ENCODE measurements at regions of chrX and their contacts with region 1.

Region 1: GRCh38 chrX:154748712-154749343 is 2.0 kb downstream of the GAB3 start:
- DNase-seq: peak; percentile 62 to 75 (median 71)
- H3K4me3 ChIP-seq: no peak overlapping the region
- H3K4me3 Mint-ChIP-seq: peak overlapping the region; percentile 26 to 86 (median 77)
- H3K27ac ChIP-seq: peak overlapping the region; percentile 26
- H3K27ac Mint-ChIP-seq: peak overlapping the region in 6 of 7 donors; percentile 69 to 84 (median 78)
- H3K4me1 ChIP-seq: peaks cover 39% of the 10 kb centered on the region
- H3K4me1 Mint-ChIP-seq: peaks cover 18 to 37% (median 25%) of the 10 kb centered on the region in 4 donors
- H3K27me3 ChIP-seq: no peaks in the 10 kb centered on the region
- H3K27me3 Mint-ChIP-seq: no peaks in the 10 kb centered on the region

Region 2: GRCh38 chrX:154727871-154728270 is 21.0 kb before region 1 on chrX:
- CTCF ChIA-PET with region 1: interaction called, 77 read pairs
- POLR2A ChIA-PET with region 1: interaction called, 40 read pairs
- intact Hi-C with region 1: loop called (anchors 1 kb)
- DNase-seq: no peak
- H3K4me3 ChIP-seq: no peak overlapping the region
- H3K4me3 Mint-ChIP-seq: no peak overlapping the region
- H3K27ac ChIP-seq: no peak overlapping the region
- H3K27ac Mint-ChIP-seq: peak overlapping the region in 1 of 7 donors; percentile 50
- H3K4me1 ChIP-seq: peaks cover 81% of the 10 kb centered on the region
- H3K4me1 Mint-ChIP-seq: peaks cover 52 to 86% (median 76%) of the 10 kb centered on the region in 4 donors
- H3K27me3 ChIP-seq: no peaks in the 10 kb centered on the region
- H3K27me3 Mint-ChIP-seq: no peaks in the 10 kb centered on the region

Region 3: GRCh38 chrX:154734061-154734781 is 14.6 kb before region 1 on chrX:
- CTCF ChIA-PET with region 1: interaction called, 77 read pairs
- POLR2A ChIA-PET with region 1: interaction called, 40 read pairs
- intact Hi-C with region 1: loop called (anchors 1 kb)
- DNase-seq: peak in 3 of 5 donors; percentile 24 to 66 (median 32)
- H3K4me3 ChIP-seq: peak overlapping the region in 1 of 2 donors; percentile 20
- H3K4me3 Mint-ChIP-seq: peak overlapping the region; percentile 50 to 85 (median 68)
- H3K27ac ChIP-seq: peak overlapping the region; percentile 64
- H3K27ac Mint-ChIP-seq: peak overlapping the region; percentile 87 to 93 (median 90)
- H3K4me1 ChIP-seq: peaks cover 98% of the 10 kb centered on the region
- H3K4me1 Mint-ChIP-seq: peaks cover 63 to 96% (median 76%) of the 10 kb centered on the region in 4 donors
- H3K27me3 ChIP-seq: no peaks in the 10 kb centered on the region
- H3K27me3 Mint-ChIP-seq: no peaks in the 10 kb centered on the region

Region 4: DNA sequence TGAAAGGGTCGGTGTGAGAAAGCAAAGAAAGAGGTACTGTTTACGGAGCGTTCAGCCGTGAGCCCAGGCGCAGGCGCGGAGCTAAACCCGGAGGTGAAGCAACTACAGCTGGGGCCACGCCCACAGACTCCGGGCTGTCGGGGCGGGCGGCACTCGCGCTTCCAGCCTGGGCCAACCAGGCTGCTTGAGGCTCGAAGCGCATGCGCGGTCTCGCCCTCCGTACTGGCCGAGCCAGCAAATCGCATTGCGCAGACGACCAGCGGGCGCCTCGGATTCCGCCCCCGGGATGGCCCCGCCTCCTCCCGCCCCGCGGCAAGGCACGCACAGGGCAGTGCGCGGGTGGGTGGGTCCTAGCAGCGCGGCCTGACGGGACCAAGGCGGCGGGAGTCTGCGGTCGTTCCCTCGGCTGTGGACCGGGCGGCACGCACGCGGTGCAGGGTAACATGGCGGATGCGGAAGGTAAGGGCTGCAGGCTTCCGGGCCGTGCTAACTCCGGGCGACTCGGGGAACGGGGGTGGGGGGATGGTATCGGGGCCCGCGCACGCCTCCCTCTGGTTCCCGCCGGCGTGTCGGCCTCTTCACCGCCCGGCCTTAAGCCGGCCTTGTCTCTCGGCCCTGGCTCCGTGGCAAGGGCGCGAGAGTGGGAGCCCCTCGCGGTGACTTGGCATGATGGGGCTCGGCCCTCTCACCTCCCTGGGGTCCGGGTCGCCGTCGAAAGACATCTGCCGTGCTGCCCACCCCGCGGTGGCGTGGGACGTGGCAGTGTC is 13.9 kb after region 1 on chrX and contains the start of gene DKC1:
- CTCF ChIA-PET with region 1: interaction called, 11 read pairs
- POLR2A ChIA-PET with region 1: interaction called, 63 read pairs
- intact Hi-C with region 1: loop called (anchors 1 kb)
- DNase-seq: peak; percentile 91 to 96 (median 95)
- H3K4me3 ChIP-seq: peak within 1 kb of the TSS; percentile 60 to 61
- H3K4me3 Mint-ChIP-seq: peak within 1 kb of the TSS; percentile 84 to 93 (median 88)
- H3K27ac ChIP-seq: peak within 1 kb of the TSS; percentile 71
- H3K27ac Mint-ChIP-seq: peak within 1 kb of the TSS; percentile 90 to 96 (median 94)
- H3K4me1 ChIP-seq: peaks cover 18% of the 10 kb centered on the region
- H3K4me1 Mint-ChIP-seq: peaks cover 10 to 25% (median 18%) of the 10 kb centered on the region in 4 donors
- H3K27me3 ChIP-seq: no peaks in the 10 kb centered on the region
- H3K27me3 Mint-ChIP-seq: no peaks in the 10 kb centered on the region
- total RNA-seq, gene DKC1: 60.0 to 63.9 TPM

Region 5: GRCh38 chrX:154840856-154841255 is 92.0 kb after region 1 on chrX:
- CTCF ChIA-PET with region 1: interaction called, 4 read pairs
- POLR2A ChIA-PET with region 1: interaction called, 3 read pairs
- intact Hi-C with region 1: loop called (anchors 1 kb)
- DNase-seq: peak in 4 of 5 donors; percentile 35 to 43 (median 36)
- H3K4me3 ChIP-seq: no peak overlapping the region
- H3K4me3 Mint-ChIP-seq: no peak overlapping the region
- H3K27ac ChIP-seq: no peak overlapping the region
- H3K27ac Mint-ChIP-seq: no peak overlapping the region
- H3K4me1 ChIP-seq: no peaks in the 10 kb centered on the region
- H3K4me1 Mint-ChIP-seq: peaks cover 0 to 1% (median 0%) of the 10 kb centered on the region in 4 donors
- H3K27me3 ChIP-seq: no peaks in the 10 kb centered on the region
- H3K27me3 Mint-ChIP-seq: no peaks in the 10 kb centered on the region

Measured in CD4-positive, alpha-beta memory T cell (primary cell).